Common myeloid progenitor, CD34-positive (primary cell): ENCODE measurements at regions of chr16 and their contacts with region 1.

Region 1: DNA sequence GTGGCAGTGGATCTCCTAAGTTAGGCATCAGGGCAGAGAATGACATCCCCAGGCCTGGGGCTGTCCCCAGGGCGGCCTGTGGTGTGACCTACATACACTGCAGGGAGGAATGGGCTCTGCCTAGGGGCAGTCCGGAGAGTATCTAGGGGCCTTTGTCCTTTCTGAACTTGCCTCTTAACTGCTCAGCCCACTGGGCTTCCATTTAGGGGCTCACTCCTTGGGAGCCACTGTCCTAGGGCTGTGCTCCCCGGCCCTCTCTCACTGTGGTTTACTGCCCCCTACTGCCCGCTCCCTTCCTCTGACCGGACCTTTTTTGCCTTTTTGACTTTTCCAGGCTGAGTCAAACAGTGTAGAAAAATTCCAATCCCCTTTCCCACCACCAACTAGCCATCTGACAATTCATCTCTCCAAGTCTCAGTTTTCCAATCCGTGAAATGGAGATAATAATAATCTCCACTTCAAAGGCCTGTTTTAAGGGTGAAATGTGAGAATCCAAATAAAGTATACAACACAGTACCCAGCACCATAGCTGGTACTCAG is 66.8 kb downstream of the DNAH3 start:
- DNase-seq: peak; percentile 49 to 59 (median 58)
- H3K4me3 ChIP-seq: no peak overlapping the region
- H3K27ac ChIP-seq: no peak overlapping the region
- H3K4me1 ChIP-seq: peaks cover 0 to 3% (median 0%) of the 10 kb centered on the region in 4 experiments
- H3K27me3 ChIP-seq: no peaks in the 10 kb centered on the region

Region 2: DNA sequence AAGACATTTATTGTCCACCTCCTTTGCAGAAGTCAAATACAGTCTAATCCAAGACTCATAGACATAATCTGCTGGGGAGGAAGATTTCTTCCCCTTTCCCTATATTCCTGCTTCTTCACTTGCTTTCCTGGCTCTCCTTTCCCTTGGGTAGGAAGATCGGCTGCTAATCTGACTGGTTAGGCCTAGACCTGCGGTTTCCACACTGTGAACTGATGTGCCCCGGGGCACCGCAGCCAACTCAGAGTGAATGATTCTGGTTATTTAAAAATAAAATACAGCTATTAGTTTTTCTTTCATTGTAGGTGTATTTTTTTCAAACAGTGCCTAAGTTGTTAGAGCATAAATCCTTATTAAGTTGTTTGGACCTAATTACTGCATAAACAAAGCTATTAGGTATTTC is 12.1 kb before region 1 on chr16:
- CTCF ChIA-PET with region 1: interaction called, 12 read pairs
- POLR2A ChIA-PET with region 1: no interaction called
- DNase-seq: no peak
- H3K4me3 ChIP-seq: no peak overlapping the region
- H3K27ac ChIP-seq: no peak overlapping the region
- H3K4me1 ChIP-seq: no peaks in the 10 kb centered on the region
- H3K27me3 ChIP-seq: no peaks in the 10 kb centered on the region

Region 3: DNA sequence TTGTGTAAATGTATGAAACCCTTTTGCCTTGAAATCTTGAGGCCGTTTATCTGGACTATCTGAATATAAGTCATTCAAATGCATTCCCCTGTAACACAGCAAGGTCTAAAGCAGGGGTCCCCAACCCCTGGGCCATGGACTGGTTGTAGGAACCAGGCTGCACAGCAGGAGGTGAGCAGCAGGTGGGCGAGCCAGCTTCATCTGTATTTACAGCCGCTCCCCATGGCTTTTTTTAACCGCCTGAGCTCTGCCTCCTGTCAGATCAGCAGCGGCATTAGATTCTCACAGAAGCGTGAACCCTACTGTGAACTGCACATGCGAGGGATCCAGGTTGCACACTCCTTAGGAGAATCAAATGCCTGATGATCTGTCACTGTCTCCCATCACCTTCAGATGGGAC is 42.7 kb after region 1 on chr16:
- CTCF ChIA-PET with region 1: no interaction called
- POLR2A ChIA-PET with region 1: no interaction called
- DNase-seq: no peak
- H3K4me3 ChIP-seq: no peak overlapping the region
- H3K27ac ChIP-seq: no peak overlapping the region
- H3K4me1 ChIP-seq: no peaks in the 10 kb centered on the region
- H3K27me3 ChIP-seq: no peaks in the 10 kb centered on the region

Region 4: GRCh38 chr16:21158208-21159110 is 74.7 kb after region 1 on chr16 and contains the start of gene LDAF1:
- CTCF ChIA-PET with region 1: no interaction called
- POLR2A ChIA-PET with region 1: no interaction called
- DNase-seq: peak; percentile 62 to 78 (median 70)
- H3K4me3 ChIP-seq: peak within 1 kb of the TSS; percentile 72 to 93 (median 82)
- H3K27ac ChIP-seq: peak within 1 kb of the TSS in 1 of 2 experiments; percentile 61
- H3K4me1 ChIP-seq: peaks cover 4 to 21% (median 18%) of the 10 kb centered on the region in 4 experiments
- H3K27me3 ChIP-seq: no peaks in the 10 kb centered on the region